CD4-positive, alpha-beta memory T cell (primary cell): ENCODE measurements at regions of chr2 and their contacts with region 1.

Region 1: GRCh38 chr2:219388127-219388844 is 574 bp upstream of the DNPEP start:
- DNase-seq: peak; percentile 97 to 99 (median 98)
- H3K4me3 ChIP-seq: peak overlapping the region; percentile 30
- H3K4me3 Mint-ChIP-seq: peak overlapping the region; percentile 63 to 96 (median 72)
- H3K27ac ChIP-seq: peak overlapping the region; percentile 77
- H3K27ac Mint-ChIP-seq: peak overlapping the region; percentile 90 to 96 (median 92)
- H3K4me1 ChIP-seq: peaks cover 22% of the 10 kb centered on the region
- H3K4me1 Mint-ChIP-seq: peaks cover 11 to 36% (median 22%) of the 10 kb centered on the region in 4 donors
- H3K27me3 ChIP-seq: no peaks in the 10 kb centered on the region
- H3K27me3 Mint-ChIP-seq: no peaks in the 10 kb centered on the region

Region 2: DNA sequence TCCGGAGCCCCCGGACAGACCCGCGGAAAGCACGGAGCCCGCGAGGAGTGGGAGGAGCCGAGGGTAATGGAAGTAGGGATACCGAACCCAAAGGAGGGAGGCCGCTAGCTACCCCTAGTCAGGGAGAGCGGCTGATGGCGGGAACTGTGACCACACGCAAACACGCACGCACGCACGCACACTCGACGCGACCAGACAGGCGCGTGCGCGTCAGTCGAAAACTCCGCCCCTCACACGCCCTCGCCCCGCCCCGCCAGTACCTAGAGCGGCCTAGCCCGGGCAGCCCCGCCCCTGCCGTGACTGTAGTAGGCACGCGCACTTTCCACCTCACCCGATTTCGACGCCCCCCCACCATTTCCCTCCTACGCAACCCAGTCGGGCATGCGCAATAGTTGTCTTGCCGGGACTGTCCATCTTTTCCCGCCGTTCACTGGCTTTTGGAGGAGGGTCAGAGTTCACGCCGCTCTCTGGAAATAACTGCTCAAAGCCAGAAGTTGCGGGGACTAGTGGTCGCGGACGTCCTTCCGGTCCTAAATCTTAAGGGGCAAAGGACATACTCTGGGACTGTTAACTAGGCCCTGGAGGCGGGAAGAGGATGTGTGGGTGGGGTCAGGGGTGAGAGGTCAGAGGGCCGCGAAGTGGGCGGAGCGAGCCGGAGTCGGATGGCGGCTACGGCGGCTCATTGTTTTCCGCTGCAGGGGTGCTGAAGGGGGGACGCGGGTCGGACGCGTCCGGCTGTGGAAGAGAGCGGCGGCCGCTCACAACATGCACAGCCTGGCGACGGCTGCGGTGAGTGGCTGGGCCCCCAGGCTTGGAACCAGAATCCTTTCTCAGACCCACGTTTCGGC is 819.9 kb before region 1 on chr2 and contains the starts of genes CNOT9 and USP37:
- CTCF ChIA-PET with region 1: no interaction called
- POLR2A ChIA-PET with region 1: no interaction called
- intact Hi-C with region 1: loop called (anchors 1 kb)
- DNase-seq: peak; percentile 99 to 100 (median 100)
- H3K4me3 ChIP-seq: peak within 1 kb of the TSS; percentile 67 to 84
- H3K4me3 Mint-ChIP-seq: peak within 1 kb of the TSS; percentile 90 to 99 (median 97)
- H3K27ac ChIP-seq: peak within 1 kb of the TSS; percentile 99
- H3K27ac Mint-ChIP-seq: peak within 1 kb of the TSS; percentile 96 to 100 (median 100)
- H3K4me1 ChIP-seq: peaks cover 43% of the 10 kb centered on the region
- H3K4me1 Mint-ChIP-seq: peaks cover 48 to 78% (median 57%) of the 10 kb centered on the region in 4 donors
- H3K27me3 ChIP-seq: no peaks in the 10 kb centered on the region
- H3K27me3 Mint-ChIP-seq: no peaks in the 10 kb centered on the region
- total RNA-seq, gene CNOT9: 53.9 to 58.0 TPM
- total RNA-seq, gene USP37: 28.2 to 29.1 TPM

Region 3: GRCh38 chr2:219081701-219082331 is 306.5 kb before region 1 on chr2:
- CTCF ChIA-PET with region 1: no interaction called
- POLR2A ChIA-PET with region 1: no interaction called
- intact Hi-C with region 1: no loop called
- DNase-seq: no peak
- H3K4me3 ChIP-seq: no peak overlapping the region
- H3K4me3 Mint-ChIP-seq: no peak overlapping the region
- H3K27ac ChIP-seq: no peak overlapping the region
- H3K27ac Mint-ChIP-seq: no peak overlapping the region
- H3K4me1 ChIP-seq: no peaks in the 10 kb centered on the region
- H3K4me1 Mint-ChIP-seq: peaks cover 0 to 10% (median 3%) of the 10 kb centered on the region in 4 donors
- H3K27me3 ChIP-seq: no peaks in the 10 kb centered on the region
- H3K27me3 Mint-ChIP-seq: no peaks in the 10 kb centered on the region

Region 4: DNA sequence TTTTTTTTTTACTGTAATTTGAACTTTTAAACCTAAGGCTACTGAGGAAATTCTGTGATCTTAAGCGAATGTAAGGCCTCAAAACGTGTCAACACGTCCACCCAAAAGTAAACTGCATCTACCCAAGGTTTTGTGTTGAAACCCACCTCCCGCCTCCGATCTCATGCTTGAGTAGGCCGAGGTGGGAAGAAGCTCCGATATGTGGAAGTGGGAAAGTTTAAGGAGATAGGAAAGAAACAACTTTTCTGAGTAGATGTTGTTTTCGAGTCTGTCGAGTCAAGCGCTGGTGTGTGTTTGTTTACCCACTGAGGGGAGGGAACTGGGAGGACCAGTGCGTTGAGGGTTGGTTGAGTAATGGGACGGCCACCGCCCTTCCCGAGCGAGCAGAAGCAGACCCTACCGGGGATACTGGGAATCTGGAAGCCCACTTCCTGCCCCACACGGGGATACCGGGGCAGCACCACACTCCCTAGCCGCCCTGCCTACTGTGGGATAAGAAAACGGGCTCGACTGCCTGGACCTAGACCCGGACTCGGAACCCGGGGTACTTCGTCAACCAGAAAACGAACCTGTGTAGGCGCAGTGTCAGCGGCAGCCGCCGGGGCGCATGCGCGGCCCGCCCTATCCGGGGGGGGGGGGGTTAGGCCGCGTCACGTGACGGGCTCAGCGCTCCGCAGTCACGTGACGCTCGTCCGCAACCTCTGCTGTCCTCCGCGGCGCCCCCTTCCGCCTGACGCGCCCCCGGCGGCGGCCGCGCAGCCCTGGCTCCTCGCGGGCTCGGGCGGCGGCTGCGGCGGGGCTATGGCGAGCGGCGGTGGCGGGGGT is 210.5 kb before region 1 on chr2 and contains the start of gene RETREG2:
- CTCF ChIA-PET with region 1: no interaction called
- POLR2A ChIA-PET with region 1: interaction called, 9 read pairs
- intact Hi-C with region 1: loop called (anchors 1 kb)
- DNase-seq: peak; percentile 88 to 91 (median 88)
- H3K4me3 ChIP-seq: peak within 1 kb of the TSS; percentile 81 to 96
- H3K4me3 Mint-ChIP-seq: peak within 1 kb of the TSS; percentile 91 to 98 (median 95)
- H3K27ac ChIP-seq: peak within 1 kb of the TSS; percentile 91
- H3K27ac Mint-ChIP-seq: peak within 1 kb of the TSS; percentile 96 to 99 (median 98)
- H3K4me1 ChIP-seq: peaks cover 66% of the 10 kb centered on the region
- H3K4me1 Mint-ChIP-seq: peaks cover 34 to 79% (median 62%) of the 10 kb centered on the region in 4 donors
- H3K27me3 ChIP-seq: no peaks in the 10 kb centered on the region
- H3K27me3 Mint-ChIP-seq: no peaks in the 10 kb centered on the region
- total RNA-seq, gene RETREG2: 123 to 128 TPM

Region 5: DNA sequence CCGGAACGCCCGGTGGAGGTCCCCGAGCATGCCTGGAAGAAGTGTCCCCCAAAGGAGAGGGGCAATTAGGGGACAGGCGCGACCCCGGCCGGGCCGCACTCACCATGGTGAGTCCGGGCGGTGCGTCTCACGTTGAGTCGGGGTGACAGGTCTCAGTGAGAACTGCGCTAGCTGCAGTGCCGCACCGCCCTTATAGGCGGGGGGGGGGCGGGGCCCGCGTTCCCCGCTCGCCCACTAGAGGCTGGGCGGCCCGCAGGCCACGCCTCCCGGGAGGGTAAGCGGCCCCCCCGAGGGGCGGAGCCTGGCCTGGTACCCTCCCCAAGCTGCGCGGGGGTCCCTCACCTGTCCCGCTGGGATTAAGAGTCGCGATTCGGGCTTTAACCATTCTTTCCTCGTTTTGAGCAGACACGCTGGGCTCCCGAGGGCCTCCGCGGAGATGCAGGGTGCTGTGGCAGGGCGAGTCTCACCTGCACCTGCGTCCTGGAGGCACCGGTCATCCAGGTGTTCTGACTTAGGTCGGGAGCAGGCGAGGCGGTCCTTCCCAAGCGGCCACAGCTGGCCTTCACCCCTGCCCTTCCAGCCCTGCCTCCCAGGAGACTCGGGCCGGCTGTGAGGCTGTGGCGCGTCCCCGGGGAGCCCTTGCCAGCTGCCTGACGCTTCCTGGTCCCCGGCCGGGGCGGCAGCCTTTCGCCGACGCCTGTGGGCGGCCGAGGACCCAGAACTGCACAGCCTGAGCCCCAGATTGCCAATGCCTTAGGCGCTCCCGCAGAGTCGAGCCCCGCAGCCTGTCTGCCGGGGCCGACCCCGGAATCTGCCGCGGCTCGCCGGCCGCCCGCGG is 134.3 kb before region 1 on chr2 and contains the start of gene TUBA4A:
- CTCF ChIA-PET with region 1: interaction called, 5 read pairs
- POLR2A ChIA-PET with region 1: interaction called, 13 read pairs
- intact Hi-C with region 1: loop called (anchors 2 kb)
- DNase-seq: peak; percentile 89 to 90 (median 90)
- H3K4me3 ChIP-seq: peak within 1 kb of the TSS; percentile 94 to 100
- H3K4me3 Mint-ChIP-seq: peak within 1 kb of the TSS; percentile 85 to 99 (median 94)
- H3K27ac ChIP-seq: peak within 1 kb of the TSS; percentile 87
- H3K27ac Mint-ChIP-seq: peak within 1 kb of the TSS; percentile 92 to 98 (median 97)
- H3K4me1 ChIP-seq: peaks cover 42% of the 10 kb centered on the region
- H3K4me1 Mint-ChIP-seq: peaks cover 34 to 60% (median 45%) of the 10 kb centered on the region in 4 donors
- H3K27me3 ChIP-seq: no peaks in the 10 kb centered on the region
- H3K27me3 Mint-ChIP-seq: no peaks in the 10 kb centered on the region
- total RNA-seq, gene TUBA4A: 242 to 259 TPM

Region 6: DNA sequence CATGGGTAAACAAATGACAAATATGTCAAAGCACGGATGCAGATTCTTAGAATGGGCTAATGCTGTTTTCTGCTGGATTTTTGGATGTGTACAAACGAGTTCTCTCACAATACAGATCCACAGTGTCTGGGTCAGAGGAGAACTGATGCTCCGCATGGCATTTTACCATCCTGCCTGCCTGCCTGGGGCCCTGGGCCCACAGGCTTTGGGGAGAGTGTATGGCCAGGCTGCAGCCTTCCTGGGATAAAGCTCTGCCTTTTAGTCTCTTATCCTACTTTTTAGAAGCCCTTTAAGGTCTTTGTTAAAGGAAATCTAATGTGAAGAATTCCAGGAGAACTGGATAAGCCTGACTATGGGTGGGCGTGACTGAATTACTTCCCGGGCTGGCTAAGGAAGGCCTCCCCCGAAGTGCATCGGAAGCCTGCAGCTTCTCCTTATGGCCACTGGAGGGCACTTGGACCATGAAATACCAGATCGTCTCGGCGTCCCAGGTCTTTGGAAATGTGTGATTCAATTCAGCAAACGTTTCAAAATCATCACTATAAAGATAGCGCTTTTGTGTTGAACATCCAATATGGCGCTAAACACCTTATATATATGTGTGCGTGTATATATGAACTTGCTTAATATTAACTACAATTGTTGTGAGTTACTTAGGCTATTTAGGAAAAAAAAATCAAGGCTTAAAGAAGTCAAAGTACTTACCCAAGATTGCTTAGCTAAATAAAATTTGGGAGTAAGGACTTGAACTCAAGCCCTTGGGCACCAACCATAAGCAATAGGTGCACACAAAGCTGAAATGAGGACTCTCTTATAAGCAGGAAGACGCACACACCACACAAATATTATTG is 14.6 kb after region 1 on chr2:
- CTCF ChIA-PET with region 1: interaction called, 43 read pairs
- POLR2A ChIA-PET with region 1: interaction called, 4 read pairs
- intact Hi-C with region 1: no loop called
- DNase-seq: peak; percentile 51 to 66 (median 58)
- H3K4me3 ChIP-seq: no peak overlapping the region
- H3K4me3 Mint-ChIP-seq: no peak overlapping the region
- H3K27ac ChIP-seq: no peak overlapping the region
- H3K27ac Mint-ChIP-seq: no peak overlapping the region
- H3K4me1 ChIP-seq: no peaks in the 10 kb centered on the region
- H3K4me1 Mint-ChIP-seq: peaks cover 0 to 7% (median 4%) of the 10 kb centered on the region in 4 donors
- H3K27me3 ChIP-seq: no peaks in the 10 kb centered on the region
- H3K27me3 Mint-ChIP-seq: peaks cover 2 to 4% of the 10 kb centered on the region in 2 donors

Region 7: GRCh38 chr2:219543601-219544358 is 155.5 kb after region 1 on chr2 and contains the starts of genes CHPF and TMEM198:
- CTCF ChIA-PET with region 1: interaction called, 24 read pairs
- POLR2A ChIA-PET with region 1: interaction called, 5 read pairs
- intact Hi-C with region 1: loop called (anchors 1 kb)
- DNase-seq: peak; percentile 90 to 95 (median 91)
- H3K4me3 ChIP-seq: peak within 1 kb of the TSS; percentile 29 to 75
- H3K4me3 Mint-ChIP-seq: peak within 1 kb of the TSS; percentile 84 to 92 (median 90)
- H3K27ac ChIP-seq: peak within 1 kb of the TSS; percentile 62
- H3K27ac Mint-ChIP-seq: peak within 1 kb of the TSS; percentile 84 to 93 (median 92)
- H3K4me1 ChIP-seq: peaks cover 21% of the 10 kb centered on the region
- H3K4me1 Mint-ChIP-seq: peaks cover 15 to 34% (median 23%) of the 10 kb centered on the region in 4 donors
- H3K27me3 ChIP-seq: no peaks in the 10 kb centered on the region
- H3K27me3 Mint-ChIP-seq: peaks cover 7 to 10% of the 10 kb centered on the region in 2 donors
- total RNA-seq, gene CHPF: 7.7 to 8.5 TPM
- total RNA-seq, gene TMEM198: 0.67 to 0.76 TPM